ENCODE measurements at regions of chr3 and their contacts with region 1.

Region 1: GRCh38 chr3:128745742-128746141 is 19.8 kb downstream of the RAB7A start:
- DNase-seq: peak; percentile 46
- ATAC-seq: peak; percentile 91
- H3K4me3 Mint-ChIP-seq: no peak overlapping the region
- H3K27ac Mint-ChIP-seq: 0 out of 2 replicates have a peak overlapping the region, but pooled peaks have one; percentile 7
- H3K4me1 Mint-ChIP-seq: no peaks in the 10 kb centered on the region
- H3K27me3 Mint-ChIP-seq: no peaks in the 10 kb centered on the region
- CTCF ChIP-seq: no peak

Region 2: GRCh38 chr3:128546646-128547045 is 199.1 kb before region 1 on chr3:
- CTCF ChIA-PET with region 1: no interaction called
- POLR2A ChIA-PET with region 1: no interaction called
- DNase-seq: no peak
- ATAC-seq: no peak
- H3K4me3 Mint-ChIP-seq: no peak overlapping the region
- H3K27ac Mint-ChIP-seq: no peak overlapping the region; the same call in 1 of the 2 replicates
- H3K4me1 Mint-ChIP-seq: peaks cover 13% of the 10 kb centered on the region
- H3K27me3 Mint-ChIP-seq: peaks cover 9% of the 10 kb centered on the region
- CTCF ChIP-seq: no peak

Region 3: DNA sequence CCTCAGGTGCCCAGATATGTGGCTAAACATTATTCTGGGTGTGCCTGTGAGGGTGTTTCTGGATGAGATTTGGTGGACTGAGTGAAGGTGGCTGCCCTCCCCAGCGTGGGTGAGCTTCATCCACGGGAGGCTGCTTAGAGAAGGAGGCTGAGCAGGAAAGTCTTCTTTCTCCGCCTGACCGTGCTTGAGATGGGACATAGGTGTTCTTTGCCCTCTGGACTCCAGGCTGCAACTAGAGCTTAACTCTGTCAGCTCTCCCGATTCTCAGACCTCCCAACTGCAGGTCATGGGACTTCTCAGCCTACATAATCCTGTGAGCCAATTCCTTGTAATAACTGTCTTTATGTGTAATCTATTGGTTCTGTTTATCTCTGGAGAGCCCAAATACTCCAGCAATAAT is 14.3 kb after region 1 on chr3:
- CTCF ChIA-PET with region 1: interaction called, 12 read pairs
- POLR2A ChIA-PET with region 1: no interaction called
- DNase-seq: no peak
- ATAC-seq: no peak
- H3K4me3 Mint-ChIP-seq: no peak overlapping the region
- H3K27ac Mint-ChIP-seq: no peak overlapping the region
- H3K4me1 Mint-ChIP-seq: peaks cover 16% of the 10 kb centered on the region
- H3K27me3 Mint-ChIP-seq: no peaks in the 10 kb centered on the region
- CTCF ChIP-seq: no peak

Region 4: GRCh38 chr3:128767094-128767750 is 21.5 kb after region 1 on chr3:
- CTCF ChIA-PET with region 1: interaction called, 16 read pairs
- POLR2A ChIA-PET with region 1: no interaction called
- DNase-seq: no peak
- ATAC-seq: peak; percentile 39
- H3K4me3 Mint-ChIP-seq: no peak overlapping the region
- H3K27ac Mint-ChIP-seq: peak overlapping the region; percentile 78
- H3K4me1 Mint-ChIP-seq: peaks cover 47% of the 10 kb centered on the region
- H3K27me3 Mint-ChIP-seq: no peaks in the 10 kb centered on the region
- CTCF ChIP-seq: no peak

Region 5: DNA sequence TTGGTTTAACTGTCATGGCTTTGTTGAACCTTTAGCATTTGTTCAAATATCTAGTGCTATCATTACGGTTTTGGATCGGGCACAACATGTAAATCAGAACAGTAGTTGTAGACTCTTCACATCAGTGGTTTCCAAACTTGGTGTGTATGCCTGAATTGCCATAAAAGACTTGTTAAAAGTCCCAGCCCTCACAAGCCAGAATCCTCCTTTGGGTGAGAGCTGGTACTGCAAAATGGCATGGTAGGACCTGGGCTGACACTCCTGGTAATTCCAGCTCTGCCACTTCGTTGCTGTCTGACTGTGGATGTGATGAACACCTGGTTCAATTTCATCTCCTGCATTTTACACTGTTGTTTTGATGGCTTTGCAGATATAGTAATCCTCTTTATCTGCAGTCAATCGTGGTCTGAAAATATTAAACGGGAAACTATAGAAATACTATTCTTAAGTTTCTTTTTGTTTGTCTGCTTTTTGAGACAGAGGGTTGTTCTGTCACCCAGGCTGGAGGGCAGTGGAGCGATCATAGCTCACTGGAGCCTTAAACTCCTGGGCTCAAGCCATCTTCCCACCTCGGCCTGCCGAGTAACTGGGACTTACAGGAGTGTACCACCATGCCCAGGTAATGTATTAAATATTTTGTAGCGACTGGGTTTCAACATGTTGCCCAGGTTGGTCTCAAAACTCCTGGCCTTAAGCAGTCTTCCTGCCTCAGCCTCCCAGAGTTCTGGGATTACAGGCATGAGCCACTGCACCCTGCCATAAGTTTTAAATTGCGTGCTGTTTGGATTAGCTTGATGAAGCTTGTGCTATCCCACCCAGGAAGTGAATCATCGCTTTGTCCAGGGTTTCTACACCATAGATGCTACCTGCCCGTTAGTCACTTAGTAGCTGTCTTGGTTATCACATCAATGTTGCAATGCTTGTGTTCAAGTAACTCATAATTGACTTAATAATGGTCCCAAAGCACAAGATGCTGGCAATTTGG is 41.8 kb after region 1 on chr3:
- CTCF ChIA-PET with region 1: interaction called, 21 read pairs
- POLR2A ChIA-PET with region 1: no interaction called
- DNase-seq: peak; percentile 50
- ATAC-seq: peak; percentile 70
- H3K4me3 Mint-ChIP-seq: no peak overlapping the region
- H3K27ac Mint-ChIP-seq: no peak overlapping the region; the same call in 1 of the 2 replicates
- H3K4me1 Mint-ChIP-seq: peaks cover 56% of the 10 kb centered on the region
- H3K27me3 Mint-ChIP-seq: no peaks in the 10 kb centered on the region
- CTCF ChIP-seq: peak; percentile 58

Region 6: GRCh38 chr3:128794770-128795649 is 49.3 kb after region 1 on chr3:
- CTCF ChIA-PET with region 1: interaction called, 21 read pairs
- POLR2A ChIA-PET with region 1: no interaction called
- DNase-seq: peak; percentile 69
- ATAC-seq: peak; percentile 99
- H3K4me3 Mint-ChIP-seq: no peak overlapping the region
- H3K27ac Mint-ChIP-seq: peak overlapping the region; percentile 47
- H3K4me1 Mint-ChIP-seq: peaks cover 20% of the 10 kb centered on the region
- H3K27me3 Mint-ChIP-seq: no peaks in the 10 kb centered on the region
- CTCF ChIP-seq: peak; percentile 80